RWPE1 (cell line): ENCODE measurements at regions of chr11 and their contacts with region 1.

Region 1: DNA sequence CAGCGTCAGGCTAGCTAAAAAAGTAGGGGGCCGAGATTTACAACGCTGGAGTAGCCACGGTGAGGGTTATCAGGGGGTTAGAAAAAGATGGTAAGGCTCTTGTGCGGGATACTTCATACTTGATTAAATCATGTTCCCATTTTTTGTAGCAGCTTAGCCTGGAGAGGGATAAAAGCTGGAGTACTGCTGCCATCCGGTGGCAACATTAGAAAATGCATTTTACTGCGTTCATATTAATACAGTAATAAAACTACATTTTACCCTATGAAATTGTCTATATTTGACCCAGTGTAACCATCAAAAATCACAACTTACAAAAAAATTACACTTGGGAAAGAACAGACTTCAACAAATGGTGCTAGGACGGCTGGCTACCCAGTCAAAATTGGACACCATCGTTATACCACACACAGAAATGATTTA is 17.3 kb downstream of the RPUSD4 start:
- DNase-seq: peak; percentile 66
- H3K27ac ChIP-seq: no peak overlapping the region
- CTCF ChIP-seq: peak; percentile 71

Region 2: GRCh38 chr11:125923012-125923579 is 271.0 kb before region 1 on chr11:
- CTCF ChIA-PET with region 1: interaction called, 10 read pairs
- POLR2A ChIA-PET with region 1: no interaction called
- DNase-seq: peak; percentile 67
- H3K27ac ChIP-seq: no peak overlapping the region
- CTCF ChIP-seq: peak; percentile 89

Region 3: DNA sequence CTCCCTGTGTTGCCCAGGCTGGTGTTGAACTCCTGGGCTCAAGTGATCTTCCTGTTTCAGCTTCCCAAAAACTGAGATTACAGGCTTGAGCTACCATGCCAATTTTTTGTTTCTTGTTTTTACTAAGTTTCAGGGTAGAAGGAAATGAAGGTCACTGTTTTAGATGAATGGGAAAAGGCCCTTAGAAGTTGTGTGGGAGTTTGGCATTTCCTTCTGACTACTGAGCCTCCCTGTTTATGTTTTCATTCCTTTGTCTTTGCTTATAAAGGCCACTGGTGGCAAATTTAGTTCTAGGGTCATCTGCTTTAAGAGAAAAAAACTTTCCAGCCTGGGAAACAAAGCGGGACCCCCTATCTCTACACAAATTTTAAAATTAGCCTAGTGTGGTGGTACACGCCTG is 52.5 kb after region 1 on chr11:
- CTCF ChIA-PET with region 1: interaction called, 12 read pairs
- POLR2A ChIA-PET with region 1: no interaction called
- DNase-seq: no peak
- H3K27ac ChIP-seq: no peak overlapping the region
- CTCF ChIP-seq: no peak